GM12878 (cell line): ENCODE measurements at regions of chr19 and their contacts with region 1.

Region 1: DNA sequence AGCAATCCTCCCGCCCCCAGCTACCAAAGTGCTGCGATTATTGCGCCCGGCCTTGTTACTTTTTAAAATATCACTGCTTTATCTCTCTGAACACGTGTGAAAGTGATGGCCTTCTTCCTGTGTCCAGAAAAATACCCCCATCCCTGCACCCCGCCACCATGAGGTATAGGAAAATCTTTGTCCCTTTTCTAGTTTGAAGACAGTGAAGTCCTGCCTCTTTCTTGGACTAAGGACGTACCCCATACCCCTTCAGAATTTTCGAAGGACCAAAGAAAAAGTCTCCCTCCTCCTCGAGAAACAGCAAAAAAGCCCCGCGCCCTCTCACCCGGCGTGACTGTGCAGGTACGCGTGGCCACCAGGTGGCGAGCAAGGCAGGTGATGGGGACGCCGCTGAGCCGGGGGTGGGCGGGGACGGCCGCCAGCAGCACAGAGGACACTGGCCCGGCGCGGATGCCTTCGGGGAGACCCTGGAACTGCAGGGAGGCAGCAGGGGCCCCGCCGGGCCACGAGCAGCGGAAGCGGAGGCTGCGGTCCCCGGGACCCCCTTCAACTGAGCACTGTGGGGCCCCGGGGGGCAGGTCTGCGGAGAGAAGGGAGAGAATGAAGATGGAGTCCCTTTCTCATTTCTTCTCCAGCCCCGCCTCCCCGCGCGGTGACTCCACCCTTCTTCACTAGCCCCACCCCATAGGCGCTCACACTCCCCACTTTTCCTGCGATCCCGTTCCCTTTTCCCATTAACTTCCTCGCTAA is 3.2 kb downstream of the VSIG10L start:
- DNase-seq: peak; percentile 24
- ATAC-seq: peak; percentile 91
- H3K4me3 ChIP-seq: peak overlapping the region; percentile 60
- H3K27ac ChIP-seq: peak overlapping the region; percentile 22
- H3K4me1 ChIP-seq: peaks cover 5% of the 10 kb centered on the region
- H3K27me3 ChIP-seq: no peaks in the 10 kb centered on the region
- CTCF ChIP-seq: peak; percentile 83 to 93 (median 88)
- EP300 ChIP-seq: no peak
- POLR2A ChIP-seq: peak; percentile 26; the same call in 1 of the 2 replicates
- RAD21 ChIP-seq: peak; percentile 84

Region 2: GRCh38 chr19:51259348-51260245 is 79.1 kb before region 1 on chr19:
- CTCF ChIA-PET with region 1: no interaction called
- POLR2A ChIA-PET with region 1: no interaction called
- RAD21 ChIA-PET with region 1: no interaction called
- SMC1A ChIA-PET with region 1: no interaction called
- in situ Hi-C with region 1: no loop called
- intact Hi-C with region 1: no loop called
- DNase-seq: peak; percentile 12
- ATAC-seq: peak; percentile 75
- H3K4me3 ChIP-seq: no peak overlapping the region
- H3K27ac ChIP-seq: no peak overlapping the region
- H3K4me1 ChIP-seq: no peaks in the 10 kb centered on the region
- H3K27me3 ChIP-seq: no peaks in the 10 kb centered on the region; a peak in 1 of 4 replicates
- CTCF ChIP-seq: peak; percentile 82 to 87 (median 85)
- EP300 ChIP-seq: no peak
- POLR2A ChIP-seq: no peak
- RAD21 ChIP-seq: peak; percentile 87

Region 3: GRCh38 chr19:51321799-51322198 is 16.9 kb before region 1 on chr19:
- CTCF ChIA-PET with region 1: no interaction called
- POLR2A ChIA-PET with region 1: no interaction called
- RAD21 ChIA-PET with region 1: no interaction called
- SMC1A ChIA-PET with region 1: no interaction called
- in situ Hi-C with region 1: no loop called
- intact Hi-C with region 1: no loop called
- DNase-seq: no peak
- ATAC-seq: no peak
- H3K4me3 ChIP-seq: no peak overlapping the region
- H3K27ac ChIP-seq: no peak overlapping the region
- H3K4me1 ChIP-seq: no peaks in the 10 kb centered on the region
- H3K27me3 ChIP-seq: peaks cover 0 to 5% of the 10 kb centered on the region in 2 experiments; a peak in 1 of 4 replicates
- CTCF ChIP-seq: no peak
- EP300 ChIP-seq: no peak
- POLR2A ChIP-seq: no peak
- RAD21 ChIP-seq: no peak

Region 4: GRCh38 chr19:51367565-51368365 is 29.0 kb after region 1 on chr19:
- CTCF ChIA-PET with region 1: interaction called, 15 read pairs
- POLR2A ChIA-PET with region 1: interaction called, 13 read pairs
- RAD21 ChIA-PET with region 1: interaction called, 11 read pairs
- SMC1A ChIA-PET with region 1: interaction called, 3 read pairs
- in situ Hi-C with region 1: no loop called
- intact Hi-C with region 1: loop called (anchors 2 kb)
- DNase-seq: peak; percentile 96
- ATAC-seq: peak; percentile 88
- H3K4me3 ChIP-seq: peak overlapping the region; percentile 82
- H3K27ac ChIP-seq: peak overlapping the region; percentile 56
- H3K4me1 ChIP-seq: peaks cover 24% of the 10 kb centered on the region
- H3K27me3 ChIP-seq: no peaks in the 10 kb centered on the region
- CTCF ChIP-seq: no peak
- EP300 ChIP-seq: no peak
- POLR2A ChIP-seq: peak; percentile 87
- RAD21 ChIP-seq: no peak

Region 5: DNA sequence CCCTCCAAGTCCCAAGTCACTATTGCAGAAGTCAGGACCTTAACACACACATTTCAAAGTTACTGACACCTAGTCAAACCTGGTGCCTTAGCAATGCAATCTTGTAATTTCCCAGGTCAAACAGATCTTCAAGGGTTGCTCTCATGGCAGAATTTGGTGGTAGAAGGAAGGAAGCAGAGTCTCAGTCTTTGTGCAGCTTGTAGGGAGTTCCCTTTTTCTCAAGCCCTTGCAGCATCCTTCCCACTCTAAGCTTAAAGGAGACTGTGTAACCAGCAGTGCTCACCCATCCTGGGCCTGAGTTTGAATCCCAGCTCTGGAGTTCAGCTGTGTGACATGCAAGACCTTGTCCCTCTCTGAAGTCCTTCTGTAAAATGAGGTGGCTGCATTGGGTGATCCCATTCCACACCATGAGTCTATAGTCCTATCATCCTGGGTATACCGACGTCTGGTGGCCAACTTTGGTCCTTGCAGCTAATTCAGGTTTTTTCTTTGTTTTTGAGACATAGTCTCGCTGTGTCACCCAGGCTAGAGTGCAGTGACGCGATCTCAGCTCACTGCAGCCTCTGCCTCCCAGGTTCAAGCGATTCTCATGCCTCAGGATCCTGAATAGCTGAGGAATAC is 68.9 kb after region 1 on chr19:
- CTCF ChIA-PET with region 1: interaction called, 47 read pairs
- POLR2A ChIA-PET with region 1: interaction called, 3 read pairs
- RAD21 ChIA-PET with region 1: interaction called, 14 read pairs
- SMC1A ChIA-PET with region 1: interaction called, 5 read pairs
- in situ Hi-C with region 1: no loop called
- intact Hi-C with region 1: loop called (anchors 1 kb)
- DNase-seq: no peak
- ATAC-seq: peak; percentile 89
- H3K4me3 ChIP-seq: no peak overlapping the region
- H3K27ac ChIP-seq: no peak overlapping the region
- H3K4me1 ChIP-seq: peaks cover 14% of the 10 kb centered on the region
- H3K27me3 ChIP-seq: no peaks in the 10 kb centered on the region
- CTCF ChIP-seq: peak; percentile 63 to 79 (median 71)
- EP300 ChIP-seq: no peak
- POLR2A ChIP-seq: no peak
- RAD21 ChIP-seq: peak; percentile 66

Region 6: DNA sequence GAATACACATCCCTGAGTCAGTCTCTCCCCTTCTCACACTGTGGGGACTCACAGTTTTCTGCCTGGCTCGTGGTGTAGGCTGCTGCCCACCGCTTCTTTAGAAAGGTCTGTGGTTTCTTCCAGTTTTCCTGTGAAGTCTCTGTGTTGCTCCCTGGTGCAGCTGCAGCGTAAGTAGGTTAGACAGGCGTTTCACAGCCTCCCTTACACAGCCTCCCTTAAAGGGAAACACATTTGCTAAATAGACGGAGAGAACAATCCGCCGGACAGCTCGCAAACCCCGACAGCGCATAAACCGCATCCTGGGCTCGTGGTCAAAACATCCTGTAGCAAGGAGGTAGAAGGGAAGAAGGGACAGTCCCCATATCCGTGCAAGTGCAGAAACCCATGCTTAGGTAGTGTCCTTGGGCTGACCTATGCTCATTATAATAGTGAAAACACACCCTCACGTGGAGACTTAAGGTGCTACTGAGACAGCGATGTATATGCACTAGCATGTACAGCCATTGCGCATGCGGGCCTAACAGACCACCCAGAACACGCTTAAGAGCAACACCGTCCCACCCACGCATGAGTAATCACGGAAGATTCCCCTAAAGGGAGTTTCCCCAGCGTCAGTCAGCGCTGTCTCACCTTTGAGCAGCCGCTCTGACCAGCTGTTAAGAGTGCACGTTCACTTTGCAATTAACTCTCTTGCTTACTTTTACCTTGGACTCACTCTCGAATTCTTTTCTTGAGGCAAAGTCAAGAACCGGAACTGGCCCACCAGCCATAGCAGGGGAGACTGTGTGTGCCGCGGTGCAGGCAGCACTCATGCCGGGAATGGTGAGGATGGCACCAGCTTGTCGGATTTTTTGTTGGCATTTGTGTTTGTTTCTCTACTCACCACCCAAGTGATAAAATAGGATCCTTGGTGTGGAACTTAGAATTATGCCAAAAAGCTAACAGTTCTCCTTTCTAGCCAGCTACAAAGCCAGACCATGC is 103.0 kb after region 1 on chr19:
- CTCF ChIA-PET with region 1: interaction called, 9 read pairs
- POLR2A ChIA-PET with region 1: no interaction called
- RAD21 ChIA-PET with region 1: interaction called, 7 read pairs
- SMC1A ChIA-PET with region 1: interaction called, 4 read pairs
- in situ Hi-C with region 1: loop called (anchors 5 kb)
- intact Hi-C with region 1: loop called (anchors 1 kb)
- DNase-seq: peak; percentile 91
- ATAC-seq: peak; percentile 94
- H3K4me3 ChIP-seq: peak overlapping the region; percentile 49; the same call in 1 of the 2 replicates
- H3K27ac ChIP-seq: no peak overlapping the region
- H3K4me1 ChIP-seq: peaks cover 27% of the 10 kb centered on the region
- H3K27me3 ChIP-seq: peaks cover 0 to 4% of the 10 kb centered on the region in 2 experiments; a peak in 2 of 4 replicates
- CTCF ChIP-seq: peak in 2 of 3 experiments; percentile 4 to 16; a peak in 2 of 6 replicates
- EP300 ChIP-seq: peak; percentile 56 to 73
- POLR2A ChIP-seq: no peak
- RAD21 ChIP-seq: no peak

Region 7: GRCh38 chr19:51593969-51594773 is 255.4 kb after region 1 on chr19:
- CTCF ChIA-PET with region 1: no interaction called
- POLR2A ChIA-PET with region 1: no interaction called
- RAD21 ChIA-PET with region 1: no interaction called
- SMC1A ChIA-PET with region 1: no interaction called
- in situ Hi-C with region 1: no loop called
- intact Hi-C with region 1: no loop called
- DNase-seq: peak; percentile 89
- ATAC-seq: peak; percentile 100
- H3K4me3 ChIP-seq: peak overlapping the region; percentile 60
- H3K27ac ChIP-seq: peak overlapping the region; percentile 60
- H3K4me1 ChIP-seq: peaks cover 8% of the 10 kb centered on the region
- H3K27me3 ChIP-seq: no peaks in the 10 kb centered on the region
- CTCF ChIP-seq: no peak
- EP300 ChIP-seq: no peak
- POLR2A ChIP-seq: peak; percentile 56; the same call in 1 of the 2 replicates
- RAD21 ChIP-seq: no peak